CD4-positive, alpha-beta memory T cell (primary cell): ENCODE measurements at regions of chr9 and their contacts with region 1.

Region 1: DNA sequence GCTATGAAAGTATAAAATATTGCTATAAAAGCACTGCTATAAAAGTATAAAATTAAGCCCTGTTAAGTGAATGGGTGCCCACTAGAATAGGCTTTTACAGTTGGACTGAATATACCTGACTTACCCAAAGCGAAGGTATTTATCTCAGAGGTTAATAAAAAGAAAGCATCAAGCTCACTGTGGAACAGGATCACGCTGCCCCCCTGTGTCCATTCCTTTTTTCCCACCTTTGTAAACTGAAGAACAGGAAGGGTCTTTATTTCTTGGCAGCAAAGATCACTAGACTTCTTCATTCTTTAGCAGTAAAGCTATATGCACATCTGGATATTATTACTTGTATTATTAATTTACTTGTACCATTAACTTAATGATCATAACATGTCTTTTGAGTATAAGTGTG is 22.1 kb upstream of the PLPP6 start:
- DNase-seq: peak; percentile 53 to 64 (median 54)
- H3K4me3 ChIP-seq: no peak overlapping the region
- H3K4me3 Mint-ChIP-seq: no peak overlapping the region
- H3K27ac ChIP-seq: no peak overlapping the region
- H3K27ac Mint-ChIP-seq: no peak overlapping the region
- H3K4me1 ChIP-seq: no peaks in the 10 kb centered on the region
- H3K4me1 Mint-ChIP-seq: peaks cover 5 to 11% (median 8%) of the 10 kb centered on the region in 4 donors
- H3K27me3 ChIP-seq: no peaks in the 10 kb centered on the region
- H3K27me3 Mint-ChIP-seq: no peaks in the 10 kb centered on the region

Region 2: GRCh38 chr9:3732077-3733038 is 907.7 kb before region 1 on chr9:
- CTCF ChIA-PET with region 1: no interaction called
- POLR2A ChIA-PET with region 1: no interaction called
- intact Hi-C with region 1: loop called (anchors 10 kb)
- DNase-seq: peak in 4 of 5 donors; percentile 38 to 43 (median 39)
- H3K4me3 ChIP-seq: no peak overlapping the region
- H3K4me3 Mint-ChIP-seq: peak overlapping the region in 6 of 8 donors; percentile 3 to 72 (median 42)
- H3K27ac ChIP-seq: no peak overlapping the region
- H3K27ac Mint-ChIP-seq: peak overlapping the region in 4 of 7 donors; percentile 49 to 76 (median 55)
- H3K4me1 ChIP-seq: peaks cover 10% of the 10 kb centered on the region
- H3K4me1 Mint-ChIP-seq: peaks cover 5 to 13% (median 12%) of the 10 kb centered on the region in 4 donors
- H3K27me3 ChIP-seq: no peaks in the 10 kb centered on the region
- H3K27me3 Mint-ChIP-seq: no peaks in the 10 kb centered on the region

Region 3: DNA sequence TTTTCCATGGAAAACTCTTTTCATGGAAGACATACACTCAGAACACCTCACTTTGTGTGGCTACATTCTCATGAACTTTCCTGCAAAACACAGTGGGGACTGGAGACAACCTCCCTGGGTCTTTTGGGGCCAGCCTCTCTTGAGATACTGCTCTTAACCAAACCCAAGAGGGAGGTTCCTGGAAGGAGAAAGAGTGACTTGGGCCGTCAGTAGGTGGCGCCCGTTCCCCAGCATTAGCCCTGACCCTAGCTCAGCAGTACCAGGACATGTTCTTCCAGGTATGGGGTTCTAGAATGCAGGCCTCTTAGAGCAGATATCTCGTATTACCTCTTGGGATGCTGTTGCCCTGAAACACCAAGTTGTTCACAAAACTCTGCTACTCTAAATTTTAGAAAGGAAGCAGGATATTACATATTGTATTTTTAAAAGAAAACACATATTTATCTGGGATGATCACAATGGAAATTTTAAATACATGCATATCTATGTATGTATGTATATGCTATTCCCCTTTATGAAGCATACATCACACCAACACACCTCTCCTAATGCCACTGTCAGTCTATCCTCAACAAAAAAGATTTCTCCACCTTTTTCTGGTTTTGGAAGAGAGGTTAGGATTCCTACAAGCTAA is 324.3 kb before region 1 on chr9:
- CTCF ChIA-PET with region 1: interaction called, 7 read pairs
- POLR2A ChIA-PET with region 1: no interaction called
- intact Hi-C with region 1: loop called (anchors 1 kb)
- DNase-seq: peak; percentile 54 to 57 (median 56)
- H3K4me3 ChIP-seq: no peak overlapping the region
- H3K4me3 Mint-ChIP-seq: no peak overlapping the region
- H3K27ac ChIP-seq: no peak overlapping the region
- H3K27ac Mint-ChIP-seq: no peak overlapping the region
- H3K4me1 ChIP-seq: no peaks in the 10 kb centered on the region
- H3K4me1 Mint-ChIP-seq: no peaks in the 10 kb centered on the region
- H3K27me3 ChIP-seq: no peaks in the 10 kb centered on the region
- H3K27me3 Mint-ChIP-seq: peaks cover 3 to 6% of the 10 kb centered on the region in 2 donors

Region 4: DNA sequence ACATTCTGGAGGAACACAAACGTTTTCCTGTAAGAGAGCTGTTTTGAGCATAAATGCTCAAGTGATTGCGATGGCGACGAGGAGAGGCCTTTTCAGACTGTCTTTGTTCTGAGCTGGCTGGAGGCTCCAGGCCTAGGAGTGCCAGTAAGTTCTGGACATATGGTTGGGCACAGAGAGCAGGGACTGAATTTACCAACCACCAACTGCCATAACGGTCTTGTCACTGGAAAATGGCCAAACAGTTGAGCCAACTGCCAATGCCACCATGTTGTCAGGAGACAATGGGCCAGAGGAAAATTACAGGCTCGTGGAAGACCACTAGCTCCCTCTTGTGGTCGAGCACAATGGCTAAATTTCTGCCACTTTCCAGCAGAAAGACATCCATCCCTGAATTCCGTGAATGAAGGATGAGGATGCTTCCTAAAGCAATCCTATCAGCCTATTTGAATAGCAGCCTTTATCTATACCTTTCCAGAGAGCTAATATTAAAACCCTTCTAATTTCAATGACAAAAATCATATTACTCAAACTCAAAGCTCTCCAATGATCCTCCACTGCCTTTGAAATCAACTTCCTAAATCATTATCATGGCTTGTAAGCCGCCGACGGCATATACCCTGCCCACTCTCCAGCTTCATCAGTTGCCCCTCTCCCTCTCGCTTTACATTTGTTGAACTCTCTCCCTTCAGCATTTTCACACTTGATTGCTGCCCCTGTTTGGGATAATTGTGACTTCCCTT is 273.3 kb before region 1 on chr9:
- CTCF ChIA-PET with region 1: interaction called, 10 read pairs
- POLR2A ChIA-PET with region 1: no interaction called
- intact Hi-C with region 1: no loop called
- DNase-seq: peak in 3 of 5 donors; percentile 13 to 27 (median 21)
- H3K4me3 ChIP-seq: no peak overlapping the region
- H3K4me3 Mint-ChIP-seq: no peak overlapping the region
- H3K27ac ChIP-seq: no peak overlapping the region
- H3K27ac Mint-ChIP-seq: no peak overlapping the region
- H3K4me1 ChIP-seq: no peaks in the 10 kb centered on the region
- H3K4me1 Mint-ChIP-seq: no peaks in the 10 kb centered on the region
- H3K27me3 ChIP-seq: no peaks in the 10 kb centered on the region
- H3K27me3 Mint-ChIP-seq: peaks cover 1 to 4% of the 10 kb centered on the region in 2 donors

Region 5: GRCh38 chr9:4382722-4383317 is 257.2 kb before region 1 on chr9:
- CTCF ChIA-PET with region 1: interaction called, 54 read pairs
- POLR2A ChIA-PET with region 1: interaction called, 3 read pairs
- intact Hi-C with region 1: loop called (anchors 1 kb)
- DNase-seq: peak in 4 of 5 donors; percentile 9 to 29 (median 25)
- H3K4me3 ChIP-seq: no peak overlapping the region
- H3K4me3 Mint-ChIP-seq: no peak overlapping the region
- H3K27ac ChIP-seq: no peak overlapping the region
- H3K27ac Mint-ChIP-seq: no peak overlapping the region
- H3K4me1 ChIP-seq: no peaks in the 10 kb centered on the region
- H3K4me1 Mint-ChIP-seq: no peaks in the 10 kb centered on the region
- H3K27me3 ChIP-seq: no peaks in the 10 kb centered on the region
- H3K27me3 Mint-ChIP-seq: peaks cover 1 to 7% of the 10 kb centered on the region in 2 donors

Region 6: GRCh38 chr9:4596165-4596922 is 43.7 kb before region 1 on chr9:
- CTCF ChIA-PET with region 1: interaction called, 10 read pairs
- POLR2A ChIA-PET with region 1: interaction called, 4 read pairs
- intact Hi-C with region 1: loop called (anchors 1 kb)
- DNase-seq: peak; percentile 77 to 83 (median 81)
- H3K4me3 ChIP-seq: no peak overlapping the region
- H3K4me3 Mint-ChIP-seq: peak overlapping the region; percentile 32 to 87 (median 62)
- H3K27ac ChIP-seq: peak overlapping the region; percentile 30
- H3K27ac Mint-ChIP-seq: peak overlapping the region; percentile 79 to 98 (median 95)
- H3K4me1 ChIP-seq: peaks cover 51% of the 10 kb centered on the region
- H3K4me1 Mint-ChIP-seq: peaks cover 32 to 62% (median 47%) of the 10 kb centered on the region in 4 donors
- H3K27me3 ChIP-seq: no peaks in the 10 kb centered on the region
- H3K27me3 Mint-ChIP-seq: no peaks in the 10 kb centered on the region

Region 7: GRCh38 chr9:4604678-4605095 is 35.3 kb before region 1 on chr9:
- CTCF ChIA-PET with region 1: interaction called, 21 read pairs
- POLR2A ChIA-PET with region 1: interaction called, 4 read pairs
- intact Hi-C with region 1: loop called (anchors 2 kb)
- DNase-seq: peak; percentile 59 to 72 (median 70)
- H3K4me3 ChIP-seq: no peak overlapping the region
- H3K4me3 Mint-ChIP-seq: peak overlapping the region in 3 of 8 donors; percentile 27 to 67 (median 52)
- H3K27ac ChIP-seq: no peak overlapping the region
- H3K27ac Mint-ChIP-seq: peak overlapping the region in 6 of 7 donors; percentile 4 to 85 (median 57)
- H3K4me1 ChIP-seq: peaks cover 24% of the 10 kb centered on the region
- H3K4me1 Mint-ChIP-seq: peaks cover 21 to 50% (median 25%) of the 10 kb centered on the region in 4 donors
- H3K27me3 ChIP-seq: no peaks in the 10 kb centered on the region
- H3K27me3 Mint-ChIP-seq: no peaks in the 10 kb centered on the region

Region 8: GRCh38 chr9:4755026-4755609 is 115.1 kb after region 1 on chr9:
- CTCF ChIA-PET with region 1: no interaction called
- POLR2A ChIA-PET with region 1: no interaction called
- intact Hi-C with region 1: no loop called
- DNase-seq: no peak
- H3K4me3 ChIP-seq: no peak overlapping the region
- H3K4me3 Mint-ChIP-seq: no peak overlapping the region
- H3K27ac ChIP-seq: no peak overlapping the region
- H3K27ac Mint-ChIP-seq: peak overlapping the region in 1 of 7 donors; percentile 39
- H3K4me1 ChIP-seq: peaks cover 4% of the 10 kb centered on the region
- H3K4me1 Mint-ChIP-seq: peaks cover 1 to 8% (median 4%) of the 10 kb centered on the region in 4 donors
- H3K27me3 ChIP-seq: peaks cover 4% of the 10 kb centered on the region
- H3K27me3 Mint-ChIP-seq: peaks cover 0 to 1% of the 10 kb centered on the region in 2 donors